Posterior cingulate gyrus (tissue), 11 donors: ENCODE measurements at regions of chr5 and their contacts with region 1.

Region 1: DNA sequence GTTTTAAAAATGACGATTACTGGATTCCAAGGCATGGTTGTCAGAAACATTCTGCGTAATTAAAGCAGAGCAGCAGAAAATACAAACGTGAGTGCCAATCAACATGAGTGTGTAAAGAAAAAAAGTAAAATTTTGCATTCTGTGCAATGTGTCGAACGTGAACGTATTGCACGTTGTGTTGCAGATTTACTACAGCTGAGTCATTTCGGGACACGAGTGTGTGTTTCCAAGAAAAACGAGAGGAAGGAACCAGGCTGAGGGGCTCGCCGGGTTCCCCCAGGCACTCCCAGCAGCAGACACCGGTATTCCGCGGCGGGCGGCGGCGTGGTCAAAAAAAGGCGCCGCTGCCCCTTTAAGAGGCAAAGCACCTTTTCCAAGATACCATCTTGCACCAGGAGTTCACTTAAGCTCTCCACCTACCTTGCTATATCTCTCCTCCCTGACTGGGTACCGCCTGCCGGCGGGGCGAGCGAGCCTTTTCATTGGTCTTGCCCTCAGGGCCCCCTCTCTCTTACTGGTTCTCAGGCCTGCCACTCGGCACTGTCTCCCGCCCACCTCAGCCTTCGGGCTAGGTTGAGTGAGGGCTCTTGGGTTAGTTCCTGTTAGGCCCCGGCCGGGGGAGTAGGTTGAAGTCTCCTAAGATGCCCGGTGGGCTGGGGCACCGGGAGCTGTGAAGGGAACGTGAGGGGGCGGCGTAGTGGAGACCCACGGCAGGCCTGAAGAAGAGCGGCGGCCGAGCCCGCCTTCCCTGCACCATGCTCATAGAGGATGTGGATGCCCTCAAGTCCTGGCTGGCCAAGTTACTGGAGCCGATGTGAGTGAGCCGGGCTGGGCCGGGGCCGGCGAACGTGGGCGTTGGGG is at the start of gene RBM27:
- DNase-seq: peak; percentile 95 to 100 (median 96)

Region 2: DNA sequence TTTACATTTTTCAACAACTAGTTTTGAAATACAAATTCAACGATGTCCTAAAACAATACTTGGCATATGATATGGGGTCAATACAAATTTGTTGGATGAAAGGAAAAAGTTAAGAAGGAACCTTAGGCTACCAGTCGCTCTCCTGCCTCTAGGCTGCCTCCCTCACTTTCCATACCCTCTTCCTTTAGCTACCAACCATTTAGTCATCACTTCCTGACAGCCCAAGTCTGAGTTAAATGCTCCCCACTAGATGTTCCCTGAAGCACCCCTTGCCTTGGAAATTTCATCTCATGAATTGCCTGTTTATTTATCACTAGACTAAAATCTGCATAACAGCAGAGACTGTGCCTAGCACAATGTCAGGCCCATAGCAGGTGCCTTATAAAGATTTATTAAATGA is 18.1 kb before region 1 on chr5:
- intact Hi-C with region 1: loop called (anchors 1 kb)
- DNase-seq: no peak

Region 3: GRCh38 chr5:146446853-146447733 is 243.9 kb after region 1 on chr5 and contains the start of gene TCERG1:
- intact Hi-C with region 1: loop called (anchors 10 kb)
- DNase-seq: peak; percentile 96 to 100 (median 98)